Ascending aorta (tissue), 2 donors: ENCODE measurements at regions of chr17 and their contacts with region 1.

Region 1: DNA sequence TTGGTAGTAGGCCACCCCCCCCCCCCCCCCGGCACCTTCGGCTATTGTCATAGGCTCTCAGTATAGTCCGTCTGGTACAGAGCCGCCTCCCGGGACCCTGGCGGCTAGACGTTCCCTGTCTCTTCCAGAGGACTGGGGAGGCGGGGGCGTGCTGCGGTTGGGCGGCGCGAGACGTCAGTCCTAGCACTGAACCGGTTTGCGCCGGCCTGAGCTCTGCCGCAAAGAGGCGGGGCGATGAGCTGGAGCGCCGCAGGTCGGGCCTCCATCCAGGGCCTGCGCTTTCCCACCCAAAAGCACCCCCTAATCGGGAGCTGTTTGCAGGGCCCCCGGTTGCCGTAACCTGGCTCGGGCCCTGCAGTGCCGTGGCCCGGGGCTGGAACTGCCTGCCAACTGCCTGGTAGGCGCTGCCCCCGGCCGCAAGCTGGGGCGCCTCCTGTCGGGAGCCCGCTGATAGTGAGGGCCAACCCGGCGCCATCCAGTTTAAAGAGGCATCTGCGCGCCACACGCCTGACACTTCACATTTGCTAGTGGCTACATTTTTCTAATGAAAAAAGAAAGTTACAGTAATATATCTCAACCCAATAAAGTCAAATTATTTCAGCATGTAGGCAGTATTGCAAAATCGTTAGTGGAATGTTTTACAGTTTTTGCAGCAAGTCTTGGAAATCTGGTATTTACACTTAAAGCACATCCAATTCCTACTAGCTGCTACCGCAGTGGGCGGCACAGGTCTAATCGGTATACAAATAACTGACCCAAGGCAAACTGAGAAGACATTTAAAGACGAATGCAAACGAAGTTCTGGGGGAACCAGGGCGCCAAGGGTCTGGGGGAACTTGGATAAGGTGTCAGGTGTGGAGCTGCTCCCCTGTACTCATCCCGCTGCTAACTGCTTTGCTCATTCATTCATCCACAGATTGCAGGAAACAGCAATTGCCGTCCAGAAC is 748 bp upstream of the USP22 start:
- DNase-seq: peak in 1 of 2 donors; percentile 99
- H3K4me3 ChIP-seq: peak overlapping the region; percentile 81 to 82
- H3K27ac ChIP-seq: peak overlapping the region; percentile 72 to 89
- H3K4me1 ChIP-seq: peaks cover 4 to 21% of the 10 kb centered on the region in 2 donors
- H3K27me3 ChIP-seq: no peaks in the 10 kb centered on the region
- CTCF ChIP-seq: peak; percentile 88 to 93 (median 92)

Region 2: GRCh38 chr17:20992987-20993862 is 50.3 kb before region 1 on chr17:
- intact Hi-C with region 1: no loop called
- DNase-seq: peak in 1 of 2 donors; percentile 76
- H3K4me3 ChIP-seq: peak overlapping the region; percentile 40 to 46
- H3K27ac ChIP-seq: no peak overlapping the region
- H3K4me1 ChIP-seq: no peaks in the 10 kb centered on the region
- H3K27me3 ChIP-seq: no peaks in the 10 kb centered on the region
- CTCF ChIP-seq: peak; percentile 75 to 85 (median 81)

Region 3: DNA sequence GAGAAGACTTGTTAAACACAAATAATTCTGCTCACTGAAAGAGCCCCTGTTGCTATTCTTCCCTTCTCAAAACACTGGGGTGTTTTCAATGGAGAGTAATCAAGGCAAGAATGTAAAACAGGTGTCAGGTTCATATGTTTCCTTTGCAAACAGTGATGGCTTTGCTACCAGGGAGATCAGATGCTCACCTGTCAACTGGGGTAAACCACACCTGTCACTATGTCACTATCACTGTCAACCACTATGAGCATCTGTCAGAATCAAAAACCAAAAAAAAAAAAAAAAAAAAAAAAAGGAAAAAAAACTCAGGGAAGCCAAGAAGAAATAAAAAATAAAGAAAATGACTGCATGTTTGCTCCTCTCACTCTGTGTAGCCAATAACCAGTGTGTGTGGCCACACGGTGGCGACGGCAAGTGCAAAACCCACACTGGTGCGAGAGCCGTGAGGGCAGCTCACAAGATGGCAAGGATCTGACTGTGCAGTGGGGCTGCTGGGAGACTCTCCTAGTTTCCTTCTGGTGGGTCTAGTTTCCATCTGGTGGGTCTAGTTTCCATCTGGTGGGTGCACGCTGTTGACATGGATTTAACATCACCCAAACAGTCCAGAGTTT is 23.5 kb before region 1 on chr17:
- intact Hi-C with region 1: loop called (anchors 1 kb)
- DNase-seq: no peak
- H3K4me3 ChIP-seq: no peak overlapping the region
- H3K27ac ChIP-seq: no peak overlapping the region
- H3K4me1 ChIP-seq: peaks cover 3 to 4% of the 10 kb centered on the region in 2 donors
- H3K27me3 ChIP-seq: no peaks in the 10 kb centered on the region
- CTCF ChIP-seq: peak in 2 of 3 experiments; percentile 33 to 52

Region 4: GRCh38 chr17:21126645-21127510 is 83.3 kb after region 1 on chr17 and contains the start of gene DHRS7B:
- intact Hi-C with region 1: loop called (anchors 2 kb)
- DNase-seq: peak; percentile 79 to 97
- H3K4me3 ChIP-seq: peak within 1 kb of the TSS; percentile 81 to 85
- H3K27ac ChIP-seq: peak within 1 kb of the TSS; percentile 93 to 96
- H3K4me1 ChIP-seq: peaks cover 3 to 8% of the 10 kb centered on the region in 2 donors
- H3K27me3 ChIP-seq: no peaks in the 10 kb centered on the region
- CTCF ChIP-seq: peak in 1 of 3 experiments; percentile 4
- total RNA-seq, gene DHRS7B: 89.5 TPM

Region 5: GRCh38 chr17:21214015-21214776 is 170.6 kb after region 1 on chr17 and contains the start of gene TMEM11:
- intact Hi-C with region 1: loop called (anchors 1 kb)
- DNase-seq: peak; percentile 83 to 97
- H3K4me3 ChIP-seq: peak within 1 kb of the TSS; percentile 84 to 96
- H3K27ac ChIP-seq: peak within 1 kb of the TSS; percentile 95 to 97
- H3K4me1 ChIP-seq: peaks cover 8 to 34% of the 10 kb centered on the region in 2 donors
- H3K27me3 ChIP-seq: no peaks in the 10 kb centered on the region
- CTCF ChIP-seq: peak in 1 of 3 experiments; percentile 2
- total RNA-seq, gene TMEM11: 25.7 TPM

Region 6: DNA sequence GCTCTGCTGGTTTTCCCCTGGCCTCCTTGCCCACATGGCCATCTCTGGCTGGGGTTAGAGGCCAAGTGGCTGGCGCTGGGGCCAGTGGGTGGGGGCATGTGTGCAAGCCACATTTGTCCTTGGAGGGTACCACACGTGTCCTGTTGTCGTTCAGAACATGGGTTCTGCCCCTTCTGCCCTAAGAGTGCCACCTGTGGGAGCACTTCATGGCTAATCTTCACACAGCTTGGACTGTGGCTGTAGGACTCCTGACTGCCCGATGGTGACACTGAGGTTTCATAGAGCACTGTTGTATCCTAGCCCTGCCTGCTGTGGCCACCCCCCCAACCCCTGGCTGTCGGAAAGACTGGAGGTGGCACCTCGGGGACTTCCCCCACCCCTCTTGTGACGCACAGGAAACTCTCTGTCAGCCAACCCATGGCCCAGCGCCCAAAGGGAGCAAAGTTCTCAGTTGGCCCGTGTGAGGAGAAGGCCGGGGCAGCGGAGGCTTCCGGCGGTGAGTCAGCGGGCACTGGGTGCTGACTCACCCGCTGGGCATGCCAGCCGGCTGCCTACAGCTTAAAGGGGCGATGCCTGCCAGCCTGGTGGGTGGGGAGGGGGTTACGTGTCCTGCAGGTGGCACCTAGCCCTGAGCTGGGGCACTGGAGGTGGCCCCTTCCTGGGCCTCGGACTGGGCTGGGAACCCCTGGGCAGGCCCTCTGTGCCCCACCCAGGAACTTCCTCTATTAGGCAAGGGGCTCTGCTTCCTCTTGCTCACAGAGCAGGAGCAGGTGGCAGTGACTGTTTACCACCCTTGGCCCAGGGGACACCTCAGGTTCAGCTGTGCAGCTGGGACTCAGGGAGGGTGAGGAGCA is 244.3 kb after region 1 on chr17:
- intact Hi-C with region 1: loop called (anchors 1 kb)
- DNase-seq: peak; percentile 96 to 100
- H3K4me3 ChIP-seq: peak overlapping the region; percentile 91 to 94
- H3K27ac ChIP-seq: peak overlapping the region; percentile 95 to 97
- H3K4me1 ChIP-seq: peaks cover 29 to 47% of the 10 kb centered on the region in 2 donors
- H3K27me3 ChIP-seq: no peaks in the 10 kb centered on the region
- CTCF ChIP-seq: peak in 1 of 3 experiments; percentile 7

Region 7: GRCh38 chr17:21376759-21377690 is 333.5 kb after region 1 on chr17:
- intact Hi-C with region 1: no loop called
- DNase-seq: no peak
- H3K4me3 ChIP-seq: peak overlapping the region; percentile 52 to 67
- H3K27ac ChIP-seq: peak overlapping the region in 1 of 2 donors; percentile 36
- H3K4me1 ChIP-seq: peaks cover 4 to 6% of the 10 kb centered on the region in 2 donors
- H3K27me3 ChIP-seq: no peaks in the 10 kb centered on the region
- CTCF ChIP-seq: no peak

Region 8: DNA sequence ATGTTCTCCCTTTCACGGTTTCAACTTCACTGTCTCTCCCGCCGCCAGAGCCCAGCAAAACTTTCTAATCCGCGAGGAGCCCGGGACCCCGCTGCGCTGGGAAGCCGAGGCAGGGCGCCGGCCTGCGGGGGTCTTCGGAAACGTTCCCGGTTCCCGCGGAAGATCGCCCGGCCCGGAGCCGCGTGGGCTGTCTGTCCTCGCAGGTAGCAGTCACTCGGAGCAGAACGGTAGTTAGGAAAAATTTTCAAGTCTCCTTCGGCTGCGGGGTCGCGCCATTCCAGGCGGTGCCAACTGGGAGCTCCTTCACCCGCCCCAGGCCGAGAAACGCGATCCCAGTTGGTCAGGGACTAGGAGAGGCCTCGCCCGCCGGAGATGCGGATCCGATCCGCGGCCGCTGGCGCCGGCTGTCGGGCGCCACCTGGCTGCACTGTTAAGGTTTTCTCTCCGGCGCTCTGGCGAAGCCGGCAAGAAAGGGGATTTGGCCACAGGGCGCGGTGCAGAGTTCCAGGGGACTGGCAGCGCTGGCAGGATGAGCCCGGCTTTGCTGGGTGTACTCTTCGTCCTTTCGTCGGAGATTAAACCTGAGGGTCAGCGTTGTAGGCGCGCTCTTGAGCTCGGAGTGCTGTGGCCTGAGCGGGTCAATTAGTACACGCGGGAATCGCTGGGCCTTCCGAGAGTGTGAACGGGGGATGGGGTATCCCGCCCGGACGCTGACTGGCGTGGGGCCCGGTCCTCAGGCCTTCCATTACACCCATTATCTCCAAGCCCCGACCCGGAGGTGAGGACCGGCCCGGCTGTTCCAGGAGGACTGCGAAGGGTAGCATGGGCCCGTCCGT is 468.0 kb after region 1 on chr17:
- intact Hi-C with region 1: loop called (anchors 5 kb)
- DNase-seq: peak; percentile 21 to 91
- H3K4me3 ChIP-seq: peak overlapping the region; percentile 70 to 74
- H3K27ac ChIP-seq: peak overlapping the region; percentile 45 to 49
- H3K4me1 ChIP-seq: peaks cover 0 to 7% of the 10 kb centered on the region in 2 donors
- H3K27me3 ChIP-seq: no peaks in the 10 kb centered on the region
- CTCF ChIP-seq: peak; percentile 35 to 81 (median 80)